Esophagus muscularis mucosa (tissue), 4 donors: ENCODE measurements at regions of chr13 and their contacts with region 1.

Region 1: DNA sequence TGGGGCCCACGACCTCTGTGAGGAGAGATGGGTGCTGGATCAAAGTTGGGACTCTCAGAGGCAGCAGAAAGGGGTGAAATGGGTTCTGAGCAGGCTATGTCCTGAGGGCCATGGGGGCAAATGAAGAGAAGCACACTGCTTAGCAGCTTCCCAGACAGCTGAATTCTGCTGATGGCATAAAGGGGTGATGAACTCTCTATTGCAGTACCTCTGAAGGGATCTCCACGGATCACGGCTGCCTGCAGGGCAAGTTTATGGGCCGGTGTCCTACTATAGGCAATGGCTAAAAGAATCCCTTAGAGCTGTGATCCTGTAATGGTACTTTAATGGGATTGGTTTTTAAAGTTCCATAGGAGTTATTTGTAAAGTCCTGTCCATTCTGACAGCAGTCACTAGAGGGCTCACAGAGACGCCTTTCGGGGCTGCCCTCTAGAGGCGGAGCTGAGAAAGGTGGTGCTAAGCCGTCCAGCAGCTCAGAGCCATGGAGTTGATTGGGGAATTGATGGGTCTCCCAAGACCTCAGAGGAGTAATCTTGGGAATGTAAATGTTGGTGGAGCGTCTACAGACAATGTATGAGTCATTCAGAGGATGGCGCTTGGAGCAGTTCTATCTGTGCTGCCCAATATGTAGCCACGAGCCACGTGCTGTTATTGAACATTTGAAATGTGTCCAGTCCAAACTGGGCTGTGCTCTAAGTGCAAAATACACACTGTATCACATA is 287.3 kb downstream of the COG6 start:
- DNase-seq: no peak
- H3K4me3 ChIP-seq: no peak overlapping the region
- H3K27ac ChIP-seq: no peak overlapping the region
- H3K4me1 ChIP-seq: peaks cover 0 to 11% (median 6%) of the 10 kb centered on the region in 4 donors
- H3K27me3 ChIP-seq: no peaks in the 10 kb centered on the region
- CTCF ChIP-seq: peak; percentile 74 to 90 (median 84)
- EP300 ChIP-seq: no peak
- POLR2A ChIP-seq: no peak

Region 2: GRCh38 chr13:39777527-39778061 is 165.1 kb before region 1 on chr13:
- intact Hi-C with region 1: loop called (anchors 10 kb)
- DNase-seq: no peak
- H3K4me3 ChIP-seq: no peak overlapping the region
- H3K27ac ChIP-seq: no peak overlapping the region
- H3K4me1 ChIP-seq: peaks cover 0 to 13% (median 9%) of the 10 kb centered on the region in 4 donors
- H3K27me3 ChIP-seq: no peaks in the 10 kb centered on the region
- CTCF ChIP-seq: peak; percentile 3 to 23 (median 22)
- EP300 ChIP-seq: no peak
- POLR2A ChIP-seq: no peak